ENCODE measurements at regions of chr9 and their contacts with region 1.

Region 1: DNA sequence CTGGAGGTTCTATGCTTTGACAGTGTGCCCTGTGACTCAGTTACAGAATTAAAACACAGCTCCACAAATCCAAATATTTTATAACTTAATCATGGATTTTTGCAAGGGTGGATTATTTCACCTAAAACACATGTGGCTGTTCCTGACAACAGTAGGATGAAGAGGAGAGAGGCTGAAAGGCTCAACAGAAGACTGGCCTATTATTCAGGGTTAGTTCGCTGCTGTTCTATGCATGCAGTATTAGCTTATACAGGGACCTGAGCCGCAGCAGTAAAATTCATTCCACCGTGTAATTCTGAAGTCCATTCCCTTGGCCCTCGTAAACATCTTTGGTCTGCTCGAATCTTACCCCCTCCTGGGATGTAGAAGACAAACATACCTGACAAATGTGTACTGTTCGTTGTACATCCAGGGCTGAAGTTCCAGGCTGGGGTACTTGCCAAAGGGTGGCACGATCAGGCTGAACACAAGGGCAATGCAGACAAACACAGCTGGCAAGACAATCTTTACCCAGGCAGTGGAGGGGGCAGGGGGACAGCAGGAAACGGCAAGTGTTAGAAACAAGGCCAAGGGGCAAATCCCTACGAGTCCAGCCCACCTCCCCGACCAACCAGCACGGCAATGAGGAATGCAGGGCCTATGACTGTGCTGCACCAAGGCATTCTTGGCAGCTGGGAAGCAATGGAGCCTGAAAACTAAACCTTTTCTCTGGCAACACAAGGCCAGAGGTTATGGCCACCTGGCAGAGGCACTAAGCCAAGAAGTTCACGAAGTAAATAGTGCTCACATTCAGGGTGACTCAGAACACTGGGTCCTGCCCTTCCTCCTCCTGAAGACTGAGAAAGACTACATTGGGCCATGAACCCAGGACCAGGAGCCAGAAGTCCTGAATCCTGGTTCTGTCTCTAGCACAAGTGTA is 46.8 kb downstream of the NIPSNAP3B start:
- DNase-seq: peak; percentile 59
- ATAC-seq: peak; percentile 73
- H3K4me3 ChIP-seq: no peak overlapping the region
- H3K27ac ChIP-seq: no peak overlapping the region
- H3K4me1 ChIP-seq: peaks cover 5% of the 10 kb centered on the region
- H3K27me3 ChIP-seq: no peaks in the 10 kb centered on the region
- CTCF ChIP-seq: no peak
- POLR2A ChIP-seq: no peak
- RAD21 ChIP-seq: no peak

Region 2: DNA sequence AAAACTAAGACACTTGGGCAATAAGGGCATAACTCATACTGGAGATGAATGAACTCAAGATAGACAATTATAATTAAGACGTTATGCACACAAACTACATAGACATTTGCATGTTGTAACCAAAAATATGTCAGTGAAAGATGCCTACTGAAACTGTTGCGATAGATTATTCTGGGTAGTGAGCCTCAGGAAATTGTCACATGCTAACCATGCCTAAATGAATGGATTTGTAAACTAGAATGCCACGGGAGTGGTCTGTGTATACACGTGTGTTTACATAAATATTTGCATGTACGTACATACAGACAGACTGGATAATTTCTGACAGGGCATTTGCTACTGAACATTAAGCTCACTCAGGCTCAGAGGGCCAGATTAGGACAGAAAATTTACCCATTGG is 45.5 kb before region 1 on chr9:
- CTCF ChIA-PET with region 1: no interaction called
- POLR2A ChIA-PET with region 1: no interaction called
- dilution Hi-C with region 1: no loop called
- in situ Hi-C with region 1: no loop called
- intact Hi-C with region 1: loop called (anchors 1 kb)
- DNase-seq: no peak
- ATAC-seq: no peak
- H3K4me3 ChIP-seq: no peak overlapping the region
- H3K27ac ChIP-seq: no peak overlapping the region
- H3K4me1 ChIP-seq: no peaks in the 10 kb centered on the region
- H3K27me3 ChIP-seq: no peaks in the 10 kb centered on the region
- CTCF ChIP-seq: no peak
- POLR2A ChIP-seq: no peak
- RAD21 ChIP-seq: no peak

Measured in IMR-90 (cell line).